ENCODE measurements at regions of chr19 and their contacts with region 1.

Region 1: DNA sequence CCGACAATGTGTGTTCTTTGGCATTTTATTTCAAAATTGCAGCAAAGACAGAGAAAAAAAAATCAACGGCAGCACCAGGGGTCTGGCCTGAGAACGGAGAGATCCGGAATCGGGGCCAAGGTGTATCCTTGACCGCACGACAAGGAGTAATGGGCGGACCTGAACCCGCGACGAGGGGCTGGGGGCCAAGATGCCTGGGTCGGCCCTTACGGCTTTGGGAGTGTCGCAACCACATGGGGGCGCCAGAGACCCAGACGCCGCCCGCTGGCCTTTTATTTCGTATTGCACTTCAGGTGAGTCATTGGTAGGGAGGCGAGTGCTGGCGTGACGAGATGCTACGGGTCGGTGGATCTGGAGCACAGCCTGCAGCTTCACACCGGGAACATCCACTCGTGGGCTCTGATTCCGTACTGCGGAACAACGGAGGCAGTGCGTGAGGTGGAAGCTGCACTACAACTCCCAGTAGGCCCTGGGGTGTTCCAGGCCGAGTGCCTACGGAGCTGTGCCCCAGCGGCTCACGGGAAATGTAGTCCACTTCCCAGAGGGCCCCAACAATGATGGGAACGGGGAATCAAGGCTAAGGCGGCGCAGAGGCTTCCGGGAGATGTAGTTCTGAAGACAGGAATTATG is 15.7 kb downstream of the BCAT2 start:
- DNase-seq: peak; percentile 89
- H3K4me3 Mint-ChIP-seq: peak overlapping the region; percentile 89
- H3K27ac Mint-ChIP-seq: peak overlapping the region; percentile 84
- H3K4me1 Mint-ChIP-seq: peaks cover 7% of the 10 kb centered on the region
- H3K27me3 Mint-ChIP-seq: no peaks in the 10 kb centered on the region

Region 2: GRCh38 chr19:48698046-48698445 is 97.1 kb before region 1 on chr19:
- CTCF ChIA-PET with region 1: no interaction called
- POLR2A ChIA-PET with region 1: no interaction called
- intact Hi-C with region 1: no loop called
- DNase-seq: no peak
- H3K4me3 Mint-ChIP-seq: no peak overlapping the region
- H3K27ac Mint-ChIP-seq: no peak overlapping the region
- H3K4me1 Mint-ChIP-seq: peaks cover 9% of the 10 kb centered on the region
- H3K27me3 Mint-ChIP-seq: peaks cover 9% of the 10 kb centered on the region

Region 3: DNA sequence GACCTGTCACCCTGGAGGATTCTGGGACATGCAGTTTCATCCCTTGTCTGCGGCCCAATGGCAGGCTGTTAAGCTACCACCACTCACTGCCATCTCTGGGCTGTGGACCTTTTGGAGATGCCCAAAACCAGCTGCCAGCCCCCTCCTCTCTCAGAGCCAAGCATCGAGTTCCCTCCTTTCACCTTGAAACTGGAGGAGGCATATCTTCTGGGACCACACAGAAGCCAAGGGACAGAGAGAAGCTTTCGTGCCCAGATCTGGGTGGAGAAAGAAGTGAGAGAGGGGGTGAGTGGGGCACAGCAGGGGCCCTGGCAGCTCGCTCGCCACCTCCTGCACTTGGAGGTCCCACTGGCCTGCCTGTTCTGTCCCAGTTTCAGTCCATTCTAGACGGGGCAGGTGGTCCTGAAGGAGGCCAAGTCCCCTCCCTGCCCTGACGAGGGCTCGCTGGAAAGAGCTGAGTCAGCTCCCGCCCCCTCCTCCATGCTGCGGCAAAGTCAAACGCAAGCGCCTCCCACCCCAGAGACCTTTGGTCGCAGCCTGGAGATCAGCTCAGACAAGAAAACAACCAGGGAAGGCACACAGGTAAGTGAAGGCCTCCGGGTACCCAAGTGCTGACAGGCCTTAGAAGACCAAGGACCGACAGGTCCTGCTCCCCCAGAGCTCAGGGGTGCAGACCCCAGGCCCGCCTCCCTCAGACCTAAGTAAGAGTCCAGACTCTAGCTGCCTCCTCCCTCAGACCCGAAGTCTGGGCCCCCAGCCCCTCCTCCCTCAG is 11.8 kb after region 1 on chr19:
- CTCF ChIA-PET with region 1: interaction called, 24 read pairs
- POLR2A ChIA-PET with region 1: no interaction called
- intact Hi-C with region 1: loop called (anchors 2 kb)
- DNase-seq: no peak
- H3K4me3 Mint-ChIP-seq: no peak overlapping the region
- H3K27ac Mint-ChIP-seq: no peak overlapping the region
- H3K4me1 Mint-ChIP-seq: peaks cover 15% of the 10 kb centered on the region
- H3K27me3 Mint-ChIP-seq: no peaks in the 10 kb centered on the region

Region 4: GRCh38 chr19:48835734-48836088 is 40.5 kb after region 1 on chr19:
- CTCF ChIA-PET with region 1: interaction called, 149 read pairs
- POLR2A ChIA-PET with region 1: interaction called, 4 read pairs
- intact Hi-C with region 1: loop called (anchors 1 kb)
- DNase-seq: peak; percentile 96
- H3K4me3 Mint-ChIP-seq: peak overlapping the region; percentile 73
- H3K27ac Mint-ChIP-seq: no peak overlapping the region
- H3K4me1 Mint-ChIP-seq: peaks cover 14% of the 10 kb centered on the region
- H3K27me3 Mint-ChIP-seq: peaks cover 9% of the 10 kb centered on the region

Region 5: DNA sequence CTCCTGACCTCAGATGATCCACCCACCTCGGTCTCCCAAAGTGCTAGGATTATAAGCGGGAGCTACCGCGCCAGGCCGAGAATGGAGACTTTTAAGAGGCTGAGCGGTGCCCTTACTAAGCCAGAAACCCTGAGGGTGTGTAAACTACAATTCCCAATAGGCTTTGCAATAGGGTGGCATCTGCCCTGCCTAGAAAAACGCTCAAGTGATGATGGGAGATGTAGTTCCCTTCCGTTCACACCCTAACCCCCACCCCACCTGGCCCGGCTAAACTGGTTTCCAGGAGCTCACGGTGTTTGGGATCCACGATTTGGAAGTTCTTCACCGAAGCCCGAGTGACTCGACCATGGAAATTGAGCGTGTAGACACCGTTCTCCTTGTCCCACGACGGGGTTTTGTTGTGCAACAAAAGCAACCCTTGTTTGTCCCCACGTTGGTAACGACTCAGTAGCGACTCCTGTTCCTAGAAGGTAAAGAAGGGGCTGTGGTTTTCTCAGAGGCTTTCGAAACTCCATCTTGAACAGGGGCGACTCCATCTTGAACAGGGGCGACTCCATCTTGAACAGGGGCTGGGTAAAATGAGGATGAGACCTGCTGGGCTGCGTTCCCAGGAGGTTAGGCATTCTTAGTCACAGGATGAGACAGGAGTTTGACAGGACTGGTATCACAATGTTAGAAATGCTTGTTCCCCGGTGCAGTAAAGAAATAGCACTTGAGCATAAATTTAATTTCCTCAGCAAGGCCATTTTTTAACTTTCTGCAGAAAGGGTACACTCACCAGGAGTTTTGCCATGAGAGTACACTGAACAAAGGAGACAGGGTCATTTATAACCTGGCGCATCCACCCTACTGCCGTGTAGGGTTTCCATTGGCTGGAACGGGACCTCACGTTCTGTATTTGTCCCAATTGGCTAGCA is 86.8 kb after region 1 on chr19:
- CTCF ChIA-PET with region 1: no interaction called
- POLR2A ChIA-PET with region 1: no interaction called
- intact Hi-C with region 1: no loop called
- DNase-seq: no peak
- H3K4me3 Mint-ChIP-seq: no peak overlapping the region
- H3K27ac Mint-ChIP-seq: no peak overlapping the region
- H3K4me1 Mint-ChIP-seq: peaks cover 12% of the 10 kb centered on the region
- H3K27me3 Mint-ChIP-seq: no peaks in the 10 kb centered on the region

Region 6: DNA sequence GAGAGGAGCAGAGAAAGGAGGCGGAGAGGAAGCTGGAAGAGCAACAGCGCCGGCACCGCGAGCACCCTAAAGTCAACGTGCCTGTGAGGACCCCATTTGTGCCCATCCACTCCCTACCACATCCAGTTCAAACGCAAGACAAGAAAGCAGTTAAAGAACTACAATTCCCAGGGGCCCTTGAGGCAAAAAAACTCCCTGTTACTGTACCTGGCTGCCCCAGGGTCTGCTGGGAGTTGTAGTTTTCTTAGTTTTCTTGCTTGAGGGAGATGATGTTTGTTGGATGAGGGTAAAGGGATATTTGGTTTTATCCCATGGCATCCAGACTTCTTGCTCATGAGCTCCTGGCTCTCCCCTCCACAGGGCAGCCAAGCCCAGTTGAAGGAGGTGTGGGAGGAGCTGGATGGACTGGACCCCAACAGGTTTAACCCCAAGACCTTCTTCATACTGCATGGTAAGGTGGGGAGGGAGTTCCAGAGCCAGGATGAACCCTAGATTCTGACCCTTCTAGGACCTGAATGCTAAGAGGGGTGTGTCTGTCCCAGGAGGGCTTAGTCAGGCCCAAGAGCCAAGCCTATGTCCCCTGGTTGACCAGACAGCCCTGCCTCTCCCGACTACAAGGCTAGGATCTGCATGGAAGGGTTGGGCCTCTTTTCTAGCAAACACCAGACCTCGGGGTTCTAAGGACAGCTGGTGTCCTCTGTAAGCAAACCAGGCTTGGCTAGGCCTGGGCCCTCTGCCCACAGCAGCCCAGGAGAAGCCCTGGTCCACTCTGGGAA is 118.1 kb after region 1 on chr19:
- CTCF ChIA-PET with region 1: no interaction called
- POLR2A ChIA-PET with region 1: no interaction called
- intact Hi-C with region 1: no loop called
- DNase-seq: no peak
- H3K4me3 Mint-ChIP-seq: no peak overlapping the region
- H3K27ac Mint-ChIP-seq: no peak overlapping the region
- H3K4me1 Mint-ChIP-seq: no peaks in the 10 kb centered on the region
- H3K27me3 Mint-ChIP-seq: no peaks in the 10 kb centered on the region

Region 7: GRCh38 chr19:48965040-48965805 is 170.1 kb after region 1 on chr19 and contains the start of gene FTL:
- CTCF ChIA-PET with region 1: interaction called, 52 read pairs
- POLR2A ChIA-PET with region 1: no interaction called
- intact Hi-C with region 1: loop called (anchors 2 kb)
- DNase-seq: peak; percentile 95
- H3K4me3 Mint-ChIP-seq: peak within 1 kb of the TSS; percentile 89
- H3K27ac Mint-ChIP-seq: peak within 1 kb of the TSS; percentile 93
- H3K4me1 Mint-ChIP-seq: peaks cover 51% of the 10 kb centered on the region
- H3K27me3 Mint-ChIP-seq: no peaks in the 10 kb centered on the region
- total RNA-seq, gene FTL: 870 to 900 TPM

Region 8: GRCh38 chr19:48970923-48971395 is 175.8 kb after region 1 on chr19:
- CTCF ChIA-PET with region 1: interaction called, 52 read pairs
- POLR2A ChIA-PET with region 1: no interaction called
- intact Hi-C with region 1: loop called (anchors 2 kb)
- DNase-seq: peak; percentile 87
- H3K4me3 Mint-ChIP-seq: no peak overlapping the region
- H3K27ac Mint-ChIP-seq: no peak overlapping the region
- H3K4me1 Mint-ChIP-seq: peaks cover 21% of the 10 kb centered on the region
- H3K27me3 Mint-ChIP-seq: no peaks in the 10 kb centered on the region

Measured in activated CD4-positive, alpha-beta memory T cell treated with anti-CD3 and anti-CD28 coated beads for 36 hours (primary cell).